B cell (primary cell): ENCODE measurements at regions of chr20 and their contacts with region 1.

Region 1: DNA sequence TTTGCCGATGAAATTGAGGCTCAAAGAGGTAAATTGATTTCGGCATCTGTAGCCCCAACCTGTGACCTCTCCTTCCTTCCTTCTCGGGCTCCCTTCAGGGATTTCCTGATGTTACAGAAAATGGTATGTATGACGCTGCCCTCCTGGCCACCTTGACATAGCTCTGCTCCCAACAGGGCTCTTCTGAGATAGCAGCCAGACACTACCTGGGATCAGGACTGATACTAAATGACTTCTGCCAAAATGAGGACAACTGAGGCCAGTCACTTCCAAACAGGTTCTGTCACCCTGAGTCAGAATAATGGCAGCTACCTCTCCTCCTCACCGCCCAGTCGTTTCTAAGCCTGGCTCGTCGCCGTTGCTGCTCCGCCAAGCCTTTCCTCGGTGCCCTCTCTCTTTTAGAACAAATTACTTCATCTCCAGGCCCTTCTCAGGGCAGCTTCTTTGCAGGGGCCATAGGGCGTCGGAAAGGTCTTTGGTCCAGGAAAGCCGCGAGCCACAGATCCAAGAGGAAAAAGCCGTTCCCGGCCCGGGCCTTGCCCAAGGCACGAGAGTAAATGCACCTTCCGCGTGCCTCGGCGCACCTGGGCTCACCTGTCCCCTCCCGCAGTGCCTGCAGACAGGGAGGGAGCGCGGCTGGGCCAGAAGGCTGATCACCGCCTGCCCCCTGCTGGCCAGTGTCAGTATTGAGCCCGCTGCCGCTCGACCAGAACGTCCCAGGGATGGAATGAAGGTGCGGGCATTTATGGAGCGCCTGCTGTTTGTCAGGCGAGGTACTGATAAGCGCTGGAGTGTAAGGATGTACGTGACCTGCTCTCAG is 904 bp upstream of the LPIN3 start:
- DNase-seq: peak; percentile 86
- ATAC-seq: peak; percentile 93
- H3K4me3 ChIP-seq: peak overlapping the region in 4 of 5 experiments; percentile 17 to 45 (median 39)
- H3K4me3 Mint-ChIP-seq: peak overlapping the region; percentile 84
- H3K27ac ChIP-seq: no peak overlapping the region
- H3K27ac Mint-ChIP-seq: no peak overlapping the region
- H3K4me1 ChIP-seq: peaks cover 12 to 15% of the 10 kb centered on the region in 2 donors
- H3K4me1 Mint-ChIP-seq: peaks cover 12% of the 10 kb centered on the region
- H3K27me3 ChIP-seq: peaks cover 0 to 20% (median 6%) of the 10 kb centered on the region in 4 experiments
- H3K27me3 Mint-ChIP-seq: peaks cover 15% of the 10 kb centered on the region
- CTCF ChIP-seq: peak; percentile 100

Region 2: DNA sequence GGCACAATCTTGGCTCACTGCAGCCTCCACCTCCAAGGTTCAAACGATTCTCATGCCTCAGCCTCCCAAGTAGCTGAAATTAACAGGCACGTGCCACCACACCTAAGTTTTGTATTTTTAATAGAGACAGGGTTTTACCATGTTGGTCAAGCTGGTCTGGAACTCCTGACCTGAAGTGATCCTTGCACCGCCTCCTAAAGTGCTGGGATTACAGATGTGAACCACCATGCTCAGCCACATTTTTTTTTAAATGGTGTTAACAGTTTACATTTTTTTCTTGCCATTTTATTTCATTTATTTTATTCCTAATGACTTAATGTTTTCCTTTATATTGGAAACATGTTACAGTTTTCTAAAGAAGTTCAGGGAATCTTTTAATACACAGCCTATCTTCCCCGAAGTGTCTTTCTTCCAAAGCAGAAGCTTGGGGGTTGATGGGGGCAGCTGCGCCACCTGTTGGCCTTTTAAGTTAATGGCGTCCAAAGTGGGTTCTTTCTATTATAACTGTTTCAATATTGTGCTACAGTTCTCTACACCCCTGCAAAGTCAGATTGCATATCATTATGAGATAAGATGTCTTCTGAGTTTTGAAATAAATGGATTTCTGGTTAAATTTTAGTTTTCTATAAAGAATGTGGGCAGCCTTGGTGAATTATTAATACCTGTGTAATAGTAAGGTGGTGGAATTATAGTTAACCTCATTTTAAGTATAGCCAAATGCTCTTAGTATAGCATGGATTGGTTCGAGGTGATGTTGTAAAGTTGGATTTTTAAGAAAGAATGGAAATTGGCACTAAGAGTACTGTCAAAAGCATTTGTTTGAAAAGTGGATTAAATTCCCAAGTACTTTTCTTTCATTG is 244.4 kb before region 1 on chr20:
- CTCF ChIA-PET with region 1: interaction called, 13 read pairs
- POLR2A ChIA-PET with region 1: no interaction called
- intact Hi-C with region 1: no loop called
- DNase-seq: peak; percentile 76
- ATAC-seq: peak; percentile 74
- H3K4me3 ChIP-seq: no peak overlapping the region
- H3K4me3 Mint-ChIP-seq: no peak overlapping the region
- H3K27ac ChIP-seq: no peak overlapping the region
- H3K27ac Mint-ChIP-seq: no peak overlapping the region
- H3K4me1 ChIP-seq: no peaks in the 10 kb centered on the region
- H3K4me1 Mint-ChIP-seq: no peaks in the 10 kb centered on the region
- H3K27me3 ChIP-seq: no peaks in the 10 kb centered on the region
- H3K27me3 Mint-ChIP-seq: no peaks in the 10 kb centered on the region
- CTCF ChIP-seq: peak; percentile 96

Region 3: DNA sequence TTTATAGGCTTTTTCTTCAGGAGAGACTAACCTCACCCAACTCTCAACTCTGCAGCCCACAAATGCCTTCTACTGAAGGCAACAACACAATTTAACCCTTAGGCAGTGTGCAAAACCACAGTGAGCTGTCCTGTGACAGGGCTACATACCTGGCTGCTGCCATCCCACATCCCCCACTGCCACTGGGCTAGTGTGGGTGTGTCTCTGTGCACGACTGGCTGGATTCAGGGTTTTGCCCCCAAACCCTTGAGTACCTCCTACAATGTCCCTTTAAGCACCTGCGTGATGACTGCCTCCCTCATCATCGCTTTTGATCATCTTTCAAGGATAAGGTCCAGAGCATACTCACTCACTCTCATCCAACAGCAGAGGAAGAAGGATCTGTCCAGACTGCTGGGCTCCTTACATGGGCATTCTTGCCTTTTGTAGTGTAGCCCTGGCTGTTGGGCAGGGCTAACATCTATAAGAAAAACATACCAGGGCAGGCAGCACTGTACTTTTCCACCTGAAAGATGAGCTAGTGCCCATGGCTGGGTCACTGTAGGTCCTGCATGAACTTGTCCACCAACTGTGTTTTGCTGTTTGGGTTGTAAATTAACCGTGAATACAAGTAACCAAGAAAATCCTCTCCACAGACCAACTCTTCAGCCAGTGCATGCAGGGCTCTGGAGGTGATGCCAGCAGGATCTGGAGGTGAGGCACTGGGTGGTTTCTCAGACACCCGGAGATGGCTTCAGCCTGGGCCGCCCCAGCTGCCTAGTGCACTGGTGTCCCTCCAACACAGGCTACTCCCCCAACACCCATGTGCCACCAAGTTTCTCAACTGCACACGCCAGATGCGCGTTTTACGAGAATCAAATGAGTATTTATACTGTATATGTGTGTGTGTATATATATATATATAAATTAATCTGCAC is 157.2 kb before region 1 on chr20:
- CTCF ChIA-PET with region 1: interaction called, 11 read pairs
- POLR2A ChIA-PET with region 1: no interaction called
- intact Hi-C with region 1: no loop called
- DNase-seq: no peak
- ATAC-seq: no peak
- H3K4me3 ChIP-seq: no peak overlapping the region
- H3K4me3 Mint-ChIP-seq: no peak overlapping the region
- H3K27ac ChIP-seq: no peak overlapping the region
- H3K27ac Mint-ChIP-seq: no peak overlapping the region
- H3K4me1 ChIP-seq: no peaks in the 10 kb centered on the region
- H3K4me1 Mint-ChIP-seq: no peaks in the 10 kb centered on the region
- H3K27me3 ChIP-seq: no peaks in the 10 kb centered on the region
- H3K27me3 Mint-ChIP-seq: no peaks in the 10 kb centered on the region
- CTCF ChIP-seq: no peak

Region 4: DNA sequence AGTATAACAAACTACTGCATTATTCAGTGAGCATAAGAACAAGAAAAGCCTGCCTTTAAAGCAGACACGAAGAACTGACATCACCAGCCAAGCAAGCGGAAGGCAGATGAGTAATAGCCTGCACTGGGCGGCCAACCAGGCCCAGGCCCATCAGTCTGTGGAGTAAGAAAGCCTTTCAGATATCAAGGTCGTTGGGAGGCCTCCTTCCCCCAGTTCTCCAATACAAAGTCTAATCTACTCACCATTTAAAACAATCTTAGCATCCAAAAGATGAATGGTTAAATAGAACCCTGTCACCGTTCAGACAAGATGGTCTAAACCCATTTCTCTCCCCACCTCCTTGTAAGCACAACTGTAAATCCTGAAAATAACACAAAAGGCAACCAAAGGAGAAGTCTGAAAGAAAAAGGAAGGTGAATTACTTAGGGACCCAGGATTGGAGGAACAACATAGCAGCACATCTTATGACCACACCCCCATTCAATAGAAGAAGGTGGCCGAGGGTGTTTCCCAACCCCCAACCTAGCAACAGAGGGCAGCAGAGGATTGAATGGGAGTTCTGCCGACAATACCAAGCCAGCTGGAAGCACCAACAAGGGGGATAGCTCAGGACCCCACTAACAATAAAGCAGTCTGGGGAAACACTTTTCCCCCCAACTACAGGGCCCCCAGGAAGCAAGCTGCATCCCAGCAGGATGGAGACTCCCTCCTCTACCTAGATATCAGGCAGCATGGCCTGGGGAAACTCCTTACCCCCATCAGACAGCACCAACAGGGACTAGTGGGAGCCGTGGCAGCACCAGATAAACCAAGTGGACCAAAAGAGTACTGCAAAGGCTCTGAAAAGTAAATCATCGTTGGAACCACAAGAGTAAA is 90.1 kb before region 1 on chr20:
- CTCF ChIA-PET with region 1: interaction called, 14 read pairs
- POLR2A ChIA-PET with region 1: interaction called, 3 read pairs
- intact Hi-C with region 1: loop called (anchors 1 kb)
- DNase-seq: peak; percentile 39
- ATAC-seq: peak; percentile 77
- H3K4me3 ChIP-seq: peak overlapping the region in 1 of 5 experiments; percentile 40
- H3K4me3 Mint-ChIP-seq: peak overlapping the region; percentile 67
- H3K27ac ChIP-seq: peak overlapping the region; percentile 42 to 49
- H3K27ac Mint-ChIP-seq: peak overlapping the region; percentile 85
- H3K4me1 ChIP-seq: peaks cover 53 to 57% of the 10 kb centered on the region in 2 donors
- H3K4me1 Mint-ChIP-seq: peaks cover 52% of the 10 kb centered on the region
- H3K27me3 ChIP-seq: no peaks in the 10 kb centered on the region
- H3K27me3 Mint-ChIP-seq: no peaks in the 10 kb centered on the region
- CTCF ChIP-seq: no peak

Region 5: GRCh38 chr20:41317536-41318270 is 22.0 kb before region 1 on chr20 and contains the start of gene ZHX3:
- CTCF ChIA-PET with region 1: interaction called, 13 read pairs
- POLR2A ChIA-PET with region 1: interaction called, 3 read pairs
- intact Hi-C with region 1: loop called (anchors 1 kb)
- DNase-seq: peak; percentile 98
- ATAC-seq: peak; percentile 95
- H3K4me3 ChIP-seq: peak within 1 kb of the TSS in 4 of 5 experiments; percentile 65 to 86 (median 74)
- H3K4me3 Mint-ChIP-seq: peak within 1 kb of the TSS; percentile 91
- H3K27ac ChIP-seq: peak within 1 kb of the TSS; percentile 63 to 76
- H3K27ac Mint-ChIP-seq: peak within 1 kb of the TSS; percentile 91
- H3K4me1 ChIP-seq: peaks cover 11 to 12% of the 10 kb centered on the region in 2 donors
- H3K4me1 Mint-ChIP-seq: peaks cover 22% of the 10 kb centered on the region
- H3K27me3 ChIP-seq: no peaks in the 10 kb centered on the region
- H3K27me3 Mint-ChIP-seq: no peaks in the 10 kb centered on the region
- CTCF ChIP-seq: no peak
- total RNA-seq, gene ZHX3: 22.2 and 24.4 TPM in 2 replicates

Region 6: DNA sequence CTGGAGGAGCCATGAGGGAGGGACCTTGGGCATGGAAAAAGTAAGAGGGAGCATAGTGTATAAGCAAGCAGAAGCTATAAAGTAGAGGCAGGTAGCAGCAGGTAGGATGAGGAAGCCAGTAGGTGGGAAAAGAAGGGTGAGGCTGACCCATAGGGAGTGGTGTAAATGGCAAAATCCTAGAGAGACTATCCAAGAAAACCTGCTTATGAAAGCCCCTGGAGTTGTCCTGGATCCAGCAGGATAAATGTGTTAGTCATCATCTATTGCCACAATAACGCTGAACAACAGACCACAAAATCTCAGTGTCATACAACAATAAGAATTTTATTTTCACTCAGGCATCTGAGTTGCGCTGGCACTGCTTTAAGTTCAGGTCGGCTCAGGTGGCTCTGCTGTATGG is 248.2 kb after region 1 on chr20:
- CTCF ChIA-PET with region 1: no interaction called
- POLR2A ChIA-PET with region 1: no interaction called
- intact Hi-C with region 1: no loop called
- DNase-seq: no peak
- ATAC-seq: no peak
- H3K4me3 ChIP-seq: no peak overlapping the region
- H3K4me3 Mint-ChIP-seq: no peak overlapping the region
- H3K27ac ChIP-seq: no peak overlapping the region
- H3K27ac Mint-ChIP-seq: no peak overlapping the region
- H3K4me1 ChIP-seq: peaks cover 6 to 8% of the 10 kb centered on the region in 2 donors
- H3K4me1 Mint-ChIP-seq: peaks cover 15% of the 10 kb centered on the region
- H3K27me3 ChIP-seq: no peaks in the 10 kb centered on the region
- H3K27me3 Mint-ChIP-seq: no peaks in the 10 kb centered on the region
- CTCF ChIP-seq: no peak